GM12878 (cell line): ENCODE measurements at regions of chr2 and their contacts with region 1.

Region 1: DNA sequence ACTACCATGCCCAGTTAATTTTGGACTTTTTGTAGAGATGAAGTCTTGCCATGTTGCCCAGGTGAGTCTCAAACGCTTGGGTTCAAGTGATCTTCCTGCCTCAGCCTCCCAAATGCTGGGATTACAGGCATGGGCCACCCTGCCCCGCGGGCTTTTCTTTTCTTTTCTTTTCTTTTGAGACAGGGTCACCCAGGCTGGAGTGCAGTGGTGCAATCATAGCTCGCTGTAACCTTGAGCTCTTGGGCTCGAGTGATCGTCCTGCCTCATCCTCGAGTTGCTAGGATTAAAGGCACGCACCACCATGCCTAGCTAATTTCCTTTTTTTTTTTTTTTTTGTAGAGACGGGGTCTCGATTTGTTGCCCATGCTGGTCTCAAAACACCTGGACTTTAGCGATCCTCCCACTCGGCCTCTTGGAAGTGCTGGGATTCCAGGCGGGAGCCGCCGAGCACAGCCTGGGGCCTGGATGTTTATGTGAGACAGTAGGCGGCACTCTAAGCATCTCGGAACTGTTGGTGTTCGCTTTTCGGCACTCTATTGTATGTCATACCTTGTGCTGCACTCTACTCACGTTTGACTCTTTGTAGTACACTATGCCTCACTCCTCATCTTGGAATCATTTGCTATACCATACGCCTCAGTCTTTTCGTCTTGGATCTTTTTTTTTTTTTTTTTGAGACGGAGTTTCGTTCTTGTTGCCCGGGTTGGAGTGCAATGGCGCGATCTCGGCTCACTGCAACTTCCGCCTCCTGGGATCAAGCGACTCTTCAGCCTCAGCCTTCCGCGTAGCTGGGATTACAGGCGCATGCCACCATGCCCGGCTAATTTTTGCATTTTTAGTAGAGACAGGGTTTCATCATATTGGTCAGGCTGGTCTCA is 24.5 kb upstream of the ZDBF2 start:
- DNase-seq: no peak
- ATAC-seq: peak; percentile 22; the same call in 1 of the 3 replicates
- H3K4me3 ChIP-seq: peak overlapping the region; percentile 40; the same call in 1 of the 2 replicates
- H3K27ac ChIP-seq: no peak overlapping the region
- H3K4me1 ChIP-seq: peaks cover 7% of the 10 kb centered on the region
- H3K27me3 ChIP-seq: peaks cover 0 to 3% of the 10 kb centered on the region in 2 experiments; a peak in 2 of 4 replicates
- CTCF ChIP-seq: peak in 2 of 3 experiments; percentile 13 to 26; a peak in 2 of 6 replicates
- EP300 ChIP-seq: no peak
- POLR2A ChIP-seq: no peak
- RAD21 ChIP-seq: peak; percentile 37; the same call in 1 of the 2 replicates

Region 2: DNA sequence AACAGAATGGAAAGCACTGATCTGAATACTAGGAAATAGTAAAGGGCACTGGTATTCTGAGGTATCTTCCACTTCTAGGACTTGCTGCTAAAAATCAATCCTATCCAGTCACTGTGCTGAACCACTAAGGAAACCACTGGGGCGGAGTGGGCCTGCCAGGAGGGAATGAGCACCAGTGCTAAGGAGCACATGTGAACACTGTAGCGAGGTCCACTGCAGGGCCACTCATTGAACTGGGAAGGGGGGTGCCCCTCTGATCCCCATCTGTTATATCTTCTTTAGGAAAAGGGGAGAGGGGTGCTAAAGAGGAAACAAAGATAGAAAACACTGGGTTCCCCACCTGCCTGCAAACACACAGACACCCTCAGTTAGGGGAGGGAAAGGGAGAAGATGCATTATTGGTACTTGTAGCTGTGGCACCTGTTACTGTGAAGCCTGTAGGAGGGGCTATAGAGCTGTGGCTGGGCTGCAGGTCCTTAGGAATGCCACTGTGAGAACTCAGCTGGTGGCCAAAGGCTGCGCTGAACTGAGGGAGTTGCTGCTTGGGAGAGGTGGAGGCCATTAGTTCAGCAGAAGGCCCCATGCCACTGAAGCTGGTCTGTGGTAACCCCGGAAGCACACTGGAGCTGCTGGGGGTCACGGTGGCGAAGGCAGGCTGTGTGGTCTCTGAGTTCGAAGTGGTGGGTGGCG is 245.8 kb before region 1 on chr2:
- CTCF ChIA-PET with region 1: no interaction called
- POLR2A ChIA-PET with region 1: no interaction called
- RAD21 ChIA-PET with region 1: no interaction called
- SMC1A ChIA-PET with region 1: no interaction called
- in situ Hi-C with region 1: no loop called
- intact Hi-C with region 1: loop called (anchors 10 kb)
- DNase-seq: no peak
- ATAC-seq: peak; percentile 61
- H3K4me3 ChIP-seq: no peak overlapping the region
- H3K27ac ChIP-seq: no peak overlapping the region
- H3K4me1 ChIP-seq: no peaks in the 10 kb centered on the region
- H3K27me3 ChIP-seq: no peaks in the 10 kb centered on the region
- CTCF ChIP-seq: peak; percentile 47 to 57 (median 50); a peak in 4 of 6 replicates
- EP300 ChIP-seq: no peak
- POLR2A ChIP-seq: no peak
- RAD21 ChIP-seq: peak; percentile 62

Region 3: GRCh38 chr2:206198672-206199071 is 51.3 kb before region 1 on chr2:
- CTCF ChIA-PET with region 1: no interaction called
- POLR2A ChIA-PET with region 1: no interaction called
- RAD21 ChIA-PET with region 1: no interaction called
- SMC1A ChIA-PET with region 1: no interaction called
- in situ Hi-C with region 1: no loop called
- intact Hi-C with region 1: no loop called
- DNase-seq: no peak
- ATAC-seq: no peak
- H3K4me3 ChIP-seq: no peak overlapping the region
- H3K27ac ChIP-seq: no peak overlapping the region
- H3K4me1 ChIP-seq: no peaks in the 10 kb centered on the region
- H3K27me3 ChIP-seq: no peaks in the 10 kb centered on the region
- CTCF ChIP-seq: no peak
- EP300 ChIP-seq: no peak
- POLR2A ChIP-seq: no peak
- RAD21 ChIP-seq: no peak

Region 4: DNA sequence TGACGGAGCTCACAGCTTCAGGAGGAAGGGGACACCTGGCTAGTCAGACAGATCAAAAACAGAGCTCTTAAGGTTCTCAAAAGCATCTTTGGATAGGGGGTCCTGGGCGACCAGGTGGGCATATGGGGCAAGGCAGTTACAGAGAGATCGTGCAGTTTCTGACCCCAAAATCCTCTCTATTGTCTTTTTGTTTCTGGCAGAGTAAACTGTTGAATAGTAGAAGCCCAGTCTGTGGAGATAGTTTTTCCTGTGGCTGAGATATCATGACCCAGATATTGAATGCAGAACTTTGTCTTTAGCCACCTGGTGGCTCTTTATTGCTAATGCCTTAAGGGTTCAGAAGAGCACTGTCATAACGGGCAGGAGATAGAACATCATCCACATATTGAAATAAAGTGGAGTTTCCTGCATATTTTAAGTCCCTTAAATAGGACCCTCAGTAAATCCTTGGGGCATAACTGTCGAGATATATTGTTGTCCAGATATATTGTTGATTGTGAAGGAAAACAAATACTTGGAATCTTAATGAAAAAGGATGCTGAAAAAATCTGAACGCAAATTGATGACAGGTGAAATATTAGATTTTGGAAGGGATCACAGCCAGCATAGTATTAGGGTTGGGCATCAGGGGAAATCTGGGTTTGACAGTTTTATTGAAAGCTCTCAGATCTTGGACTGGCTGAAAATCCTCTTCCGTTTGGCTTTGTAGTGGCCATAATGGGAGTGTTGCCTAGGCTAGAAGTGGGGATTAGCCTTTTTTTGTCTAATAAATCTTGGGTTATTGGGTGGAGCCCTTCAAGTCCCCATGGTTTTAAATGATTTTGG is 10.4 kb after region 1 on chr2:
- CTCF ChIA-PET with region 1: interaction called, 3 read pairs
- POLR2A ChIA-PET with region 1: no interaction called
- RAD21 ChIA-PET with region 1: interaction called, 8 read pairs
- SMC1A ChIA-PET with region 1: interaction called, 12 read pairs
- in situ Hi-C with region 1: no loop called
- intact Hi-C with region 1: no loop called
- DNase-seq: no peak
- ATAC-seq: peak; percentile 95
- H3K4me3 ChIP-seq: no peak overlapping the region
- H3K27ac ChIP-seq: no peak overlapping the region
- H3K4me1 ChIP-seq: no peaks in the 10 kb centered on the region; the same call in 1 of the 2 replicates
- H3K27me3 ChIP-seq: peaks cover 2 to 18% of the 10 kb centered on the region in 2 experiments
- CTCF ChIP-seq: peak; percentile 45 to 55 (median 49)
- EP300 ChIP-seq: no peak
- POLR2A ChIP-seq: no peak
- RAD21 ChIP-seq: peak; percentile 54

Region 5: GRCh38 chr2:206572725-206573124 is 322.8 kb after region 1 on chr2:
- CTCF ChIA-PET with region 1: no interaction called
- POLR2A ChIA-PET with region 1: no interaction called
- RAD21 ChIA-PET with region 1: no interaction called
- SMC1A ChIA-PET with region 1: no interaction called
- in situ Hi-C with region 1: no loop called
- intact Hi-C with region 1: no loop called
- DNase-seq: no peak
- ATAC-seq: peak; percentile 77
- H3K4me3 ChIP-seq: no peak overlapping the region
- H3K27ac ChIP-seq: no peak overlapping the region
- H3K4me1 ChIP-seq: no peaks in the 10 kb centered on the region
- H3K27me3 ChIP-seq: no peaks in the 10 kb centered on the region
- CTCF ChIP-seq: no peak
- EP300 ChIP-seq: 0 out of 4 replicates have a peak, but pooled peaks of 1 of the 2 experiments have one; percentile 13
- POLR2A ChIP-seq: no peak
- RAD21 ChIP-seq: no peak

Region 6: DNA sequence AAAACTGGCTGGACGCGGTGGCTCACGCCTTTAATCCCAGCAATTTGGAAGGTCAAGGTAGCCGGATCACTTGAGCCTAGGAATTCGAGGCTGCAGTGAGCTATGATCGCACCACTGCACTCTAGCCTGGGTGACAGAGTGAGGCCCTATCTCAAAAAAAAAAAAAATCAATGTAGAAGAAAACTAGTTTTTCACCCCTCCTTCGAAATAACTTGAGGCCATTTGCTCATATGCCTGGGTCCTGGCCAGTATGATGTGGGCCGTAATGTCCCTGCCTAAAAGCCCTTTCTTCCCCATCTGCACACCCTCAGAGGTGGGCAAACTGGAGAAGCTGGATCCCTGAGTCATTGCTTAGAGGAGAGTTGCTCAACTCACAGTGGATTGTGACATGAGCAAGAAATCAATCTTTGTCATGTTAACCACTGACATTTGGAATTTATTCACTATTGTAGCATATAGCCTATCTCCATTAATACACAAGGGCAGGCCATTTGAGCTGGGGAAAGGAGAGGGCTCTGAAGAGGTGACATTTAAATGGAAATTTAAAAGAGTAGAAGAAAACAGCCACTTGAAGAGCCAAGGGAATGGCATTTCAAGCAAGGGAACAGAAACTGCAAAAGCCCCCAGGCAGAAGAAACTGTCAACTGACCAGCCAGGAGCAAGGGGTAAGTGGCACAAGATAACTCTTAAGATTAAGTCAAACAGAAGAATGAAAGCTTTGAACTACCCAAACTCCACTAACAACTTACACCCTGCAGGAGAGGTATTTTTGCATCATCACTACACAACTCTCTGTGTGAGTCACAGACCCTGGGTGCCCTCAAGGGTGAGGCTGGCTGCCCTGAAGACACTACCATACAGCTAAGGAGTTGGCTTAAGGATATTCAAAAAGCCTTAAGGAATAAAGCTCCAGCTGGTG is 1382.9 kb after region 1 on chr2:
- CTCF ChIA-PET with region 1: no interaction called
- POLR2A ChIA-PET with region 1: interaction called, 10 read pairs
- RAD21 ChIA-PET with region 1: no interaction called
- SMC1A ChIA-PET with region 1: no interaction called
- in situ Hi-C with region 1: no loop called
- intact Hi-C with region 1: no loop called
- DNase-seq: no peak
- ATAC-seq: peak; percentile 86
- H3K4me3 ChIP-seq: no peak overlapping the region
- H3K27ac ChIP-seq: no peak overlapping the region
- H3K4me1 ChIP-seq: no peaks in the 10 kb centered on the region
- H3K27me3 ChIP-seq: no peaks in the 10 kb centered on the region
- CTCF ChIP-seq: no peak
- EP300 ChIP-seq: no peak
- POLR2A ChIP-seq: no peak
- RAD21 ChIP-seq: no peak